Left lung (tissue), 14 donors: ENCODE measurements at regions of chr20 and their contacts with region 1.

Region 1: DNA sequence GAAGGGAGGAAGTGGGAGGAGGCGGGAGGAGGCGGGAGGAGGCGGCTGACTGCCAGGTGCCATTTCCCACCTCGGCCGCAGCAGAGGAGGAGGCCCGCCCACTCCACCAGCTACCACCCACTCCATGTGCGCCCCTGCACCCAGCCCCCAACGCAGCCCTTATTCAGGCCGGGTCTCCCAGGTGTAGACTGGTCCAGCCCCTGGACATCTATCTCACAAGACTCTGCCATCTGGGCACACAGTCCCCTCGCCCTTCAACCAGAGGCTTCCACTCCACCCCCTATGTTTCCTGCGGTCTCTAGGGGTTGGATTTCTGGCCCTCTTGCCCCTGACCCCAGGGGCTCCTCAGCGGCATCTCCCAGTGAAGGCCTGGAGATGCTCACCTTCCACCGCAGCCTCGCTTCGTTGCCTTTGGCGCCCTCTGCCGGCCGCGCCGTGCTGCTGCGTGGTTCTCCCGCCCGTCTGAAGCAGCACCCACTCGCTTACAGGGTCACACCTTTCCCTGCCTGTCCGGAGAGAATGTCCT is 32.6 kb upstream of the FAM83D start:
- DNase-seq: peak; percentile 20 to 95 (median 52)
- ATAC-seq: peak; percentile 95
- H3K4me3 ChIP-seq: no peak overlapping the region
- H3K27ac ChIP-seq: no peak overlapping the region
- H3K4me1 ChIP-seq: peaks cover 0 to 10% of the 10 kb centered on the region in 2 donors
- H3K27me3 ChIP-seq: peaks cover 0 to 26% of the 10 kb centered on the region in 2 donors
- CTCF ChIP-seq: peak; percentile 88

Region 2: DNA sequence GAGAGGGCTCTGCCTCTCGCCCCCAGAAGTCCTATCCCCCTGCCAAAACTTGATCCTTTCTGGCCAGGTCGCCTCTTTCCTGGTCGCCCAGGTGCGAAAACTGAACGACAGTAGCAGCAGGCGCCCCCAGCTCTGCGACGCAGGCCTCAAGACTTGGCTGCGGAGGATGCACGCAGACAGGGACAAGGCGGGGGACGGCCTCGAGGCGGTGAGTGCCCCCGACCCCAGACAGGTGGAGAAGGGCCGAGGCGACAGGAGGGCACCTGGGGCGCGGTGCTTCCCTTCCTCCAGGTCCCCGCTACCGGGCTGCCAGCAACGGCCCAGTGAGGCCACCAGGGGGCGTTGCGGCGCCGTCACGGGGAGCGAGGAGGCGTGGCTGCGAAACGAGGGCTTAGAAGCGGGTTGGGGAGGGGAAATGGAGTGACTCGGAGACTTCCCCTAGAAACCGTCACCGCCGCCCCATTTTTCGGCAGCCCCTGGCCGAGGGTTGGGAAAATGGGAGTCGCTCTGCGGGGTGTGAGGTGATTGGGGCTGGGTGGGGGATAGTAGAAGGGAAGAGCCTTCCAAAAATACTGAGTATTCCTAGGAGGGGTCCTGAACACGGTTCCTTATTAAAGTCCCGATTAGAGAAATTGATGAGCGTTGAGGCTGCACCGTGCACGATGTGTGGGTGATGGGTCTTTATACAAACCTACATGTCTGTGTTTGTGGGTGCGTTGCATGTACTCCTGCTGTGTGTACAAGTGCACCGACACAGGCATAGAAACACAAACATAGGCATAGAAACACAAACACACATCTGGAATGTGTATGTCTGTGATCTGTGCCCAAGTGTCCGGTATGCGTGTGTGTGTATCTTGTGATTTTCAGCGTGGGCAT is 247.4 kb before region 1 on chr20:
- intact Hi-C with region 1: loop called in 1 of 2 experiments (anchors 10 kb)
- DNase-seq: peak; percentile 44 to 95 (median 78)
- ATAC-seq: peak; percentile 99
- H3K4me3 ChIP-seq: no peak overlapping the region
- H3K27ac ChIP-seq: no peak overlapping the region
- H3K4me1 ChIP-seq: peaks cover 6 to 9% of the 10 kb centered on the region in 2 donors
- H3K27me3 ChIP-seq: peaks cover 8 to 92% of the 10 kb centered on the region in 2 donors
- CTCF ChIP-seq: peak; percentile 95 to 98

Region 3: DNA sequence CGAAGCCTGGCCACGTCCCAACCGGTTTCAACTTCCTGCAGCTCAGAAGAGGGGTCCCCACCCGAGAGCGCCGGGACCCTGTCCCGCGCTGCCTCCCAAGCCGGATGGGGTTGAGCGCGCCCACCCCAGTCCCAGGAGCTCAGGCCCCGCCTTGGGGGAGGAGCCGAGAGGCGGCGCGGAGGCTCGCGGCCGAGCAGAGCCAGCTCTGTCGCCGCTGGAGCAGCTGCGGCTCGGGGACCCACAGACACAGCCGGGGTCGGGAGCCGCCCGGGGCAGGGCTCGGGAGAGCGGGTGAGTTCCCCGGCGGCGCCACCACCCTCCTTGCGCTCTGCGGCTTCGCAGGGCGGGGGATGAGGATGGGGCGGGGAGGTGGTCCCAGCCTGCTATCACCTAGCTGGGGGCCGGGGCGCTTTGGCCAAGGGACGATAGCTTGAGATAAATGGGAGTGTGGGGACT is 88.1 kb before region 1 on chr20 and contains the start of gene PPP1R16B:
- intact Hi-C with region 1: loop called in 1 of 2 experiments (anchors 10 kb)
- DNase-seq: peak in 3 of 4 donors; percentile 52 to 87 (median 59)
- ATAC-seq: peak; percentile 82
- H3K4me3 ChIP-seq: peak within 1 kb of the TSS; percentile 51 to 57
- H3K27ac ChIP-seq: peak within 1 kb of the TSS; percentile 69
- H3K4me1 ChIP-seq: peaks cover 9 to 44% of the 10 kb centered on the region in 2 donors
- H3K27me3 ChIP-seq: peaks cover 23 to 57% of the 10 kb centered on the region in 2 donors
- CTCF ChIP-seq: no peak
- polyA plus RNA-seq, gene PPP1R16B: 6.3 to 10.8 (median 7.8) TPM